Stomach (tissue), 19 donors: ENCODE measurements at regions of chr5 and their contacts with region 1.

Region 1: GRCh38 chr5:132419502-132420468 is 50.3 kb downstream of the SLC22A5 start:
- DNase-seq: peak; percentile 67 to 95
- H3K4me3 ChIP-seq: peak overlapping the region in 1 of 4 donors; percentile 25
- H3K27ac ChIP-seq: peak overlapping the region; percentile 48 to 100 (median 78)
- H3K4me1 ChIP-seq: peaks cover 62 to 100% (median 88%) of the 10 kb centered on the region in 4 donors
- H3K27me3 ChIP-seq: no peaks in the 10 kb centered on the region
- CTCF ChIP-seq: peak in 5 of 7 experiments; percentile 73 to 89 (median 85)
- EP300 ChIP-seq: no peak
- POLR2A ChIP-seq: no peak

Region 2: DNA sequence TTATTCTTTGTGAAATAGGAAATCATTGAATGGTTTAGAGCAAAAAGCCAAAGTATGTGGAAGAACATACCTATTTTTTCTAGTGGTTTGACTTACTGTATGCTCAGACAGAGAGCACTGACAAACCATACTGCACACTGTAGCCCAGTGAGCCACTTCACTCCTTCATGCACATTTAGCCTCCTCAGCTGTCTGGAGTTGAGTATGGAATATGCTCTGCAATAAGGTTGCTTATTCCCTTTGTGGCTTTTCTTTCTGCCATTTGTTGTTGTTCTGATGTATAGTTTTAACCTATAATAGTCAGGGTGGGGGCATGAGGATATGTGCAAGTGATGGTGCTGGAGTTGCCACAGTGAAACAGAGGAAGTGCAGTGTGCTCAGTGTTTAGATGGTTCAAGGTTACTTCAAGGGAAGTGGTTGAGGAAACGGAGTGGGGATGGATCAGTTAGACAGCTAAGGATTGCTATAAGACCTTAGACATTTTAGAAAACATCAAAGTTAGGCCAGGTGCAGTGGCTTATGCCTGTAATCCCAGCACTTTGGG is 1055.2 kb before region 1 on chr5:
- intact Hi-C with region 1: no loop called
- DNase-seq: peak in 1 of 2 donors; percentile 34
- H3K4me3 ChIP-seq: no peak overlapping the region
- H3K27ac ChIP-seq: no peak overlapping the region
- H3K4me1 ChIP-seq: no peaks in the 10 kb centered on the region
- H3K27me3 ChIP-seq: no peaks in the 10 kb centered on the region
- CTCF ChIP-seq: no peak
- EP300 ChIP-seq: no peak
- POLR2A ChIP-seq: no peak

Region 3: DNA sequence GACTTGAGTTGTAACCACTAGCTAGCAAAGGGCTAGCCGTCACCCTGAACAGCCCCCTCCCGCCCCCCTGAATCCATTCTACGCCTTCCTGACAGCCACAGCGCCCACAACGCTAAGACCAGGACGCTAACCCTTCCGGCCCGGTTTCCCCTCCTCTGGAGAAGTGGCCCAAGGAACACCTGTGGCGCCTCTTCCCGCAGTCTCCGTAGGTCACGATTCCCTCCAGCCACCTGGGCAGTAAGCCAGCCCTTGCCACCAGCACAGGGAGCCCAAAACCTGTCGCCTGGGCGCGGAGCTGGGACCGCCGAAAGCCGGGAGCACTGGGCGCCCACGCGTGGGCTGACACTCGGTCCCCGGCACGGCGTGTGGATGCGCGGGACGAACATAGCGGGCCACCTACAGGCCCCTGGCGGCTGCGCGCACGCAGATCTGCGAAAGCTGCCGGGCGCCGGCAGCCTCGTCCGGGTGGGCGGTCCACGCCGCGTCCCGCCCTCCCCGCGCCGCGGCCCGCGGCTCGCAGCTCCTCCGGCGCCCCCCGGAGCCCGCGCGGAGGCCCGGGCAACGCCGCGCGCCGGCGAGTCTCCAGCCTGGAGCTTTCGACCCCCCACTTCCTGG is 70.2 kb after region 1 on chr5:
- intact Hi-C with region 1: loop called (anchors 5 kb)
- DNase-seq: peak; percentile 69 to 85
- H3K4me3 ChIP-seq: peak overlapping the region; percentile 84 to 96 (median 89)
- H3K27ac ChIP-seq: peak overlapping the region; percentile 94 to 99 (median 95)
- H3K4me1 ChIP-seq: peaks cover 53 to 80% (median 75%) of the 10 kb centered on the region in 4 donors
- H3K27me3 ChIP-seq: no peaks in the 10 kb centered on the region
- CTCF ChIP-seq: no peak
- EP300 ChIP-seq: no peak
- POLR2A ChIP-seq: no peak